ENCODE measurements at regions of chr17 and their contacts with region 1.

Region 1: GRCh38 chr17:75319904-75320691 is 30.9 kb upstream of the SLC25A19 start:
- DNase-seq: no peak
- ATAC-seq: no peak
- H3K4me3 Mint-ChIP-seq: no peak overlapping the region
- H3K27ac Mint-ChIP-seq: peak overlapping the region; percentile 14; the same call in 1 of the 2 replicates
- H3K4me1 Mint-ChIP-seq: peaks cover 16% of the 10 kb centered on the region
- H3K27me3 Mint-ChIP-seq: no peaks in the 10 kb centered on the region
- CTCF ChIP-seq: no peak

Region 2: GRCh38 chr17:75225016-75225415 is 95.1 kb before region 1 on chr17:
- CTCF ChIA-PET with region 1: no interaction called
- POLR2A ChIA-PET with region 1: no interaction called
- DNase-seq: no peak
- ATAC-seq: no peak
- H3K4me3 Mint-ChIP-seq: no peak overlapping the region
- H3K27ac Mint-ChIP-seq: no peak overlapping the region
- H3K4me1 Mint-ChIP-seq: no peaks in the 10 kb centered on the region
- H3K27me3 Mint-ChIP-seq: no peaks in the 10 kb centered on the region; the same call in 1 of the 2 replicates
- CTCF ChIP-seq: no peak

Region 3: GRCh38 chr17:75289115-75289831 is 30.8 kb before region 1 on chr17 and contains the start of gene SLC25A19:
- CTCF ChIA-PET with region 1: interaction called, 13 read pairs
- POLR2A ChIA-PET with region 1: interaction called, 3 read pairs
- DNase-seq: peak; percentile 98
- ATAC-seq: peak; percentile 98
- H3K4me3 Mint-ChIP-seq: peak within 1 kb of the TSS; percentile 94
- H3K27ac Mint-ChIP-seq: peak within 1 kb of the TSS; percentile 99
- H3K4me1 Mint-ChIP-seq: peaks cover 8% of the 10 kb centered on the region
- H3K27me3 Mint-ChIP-seq: no peaks in the 10 kb centered on the region; the same call in 1 of the 2 replicates
- CTCF ChIP-seq: no peak
- total RNA-seq, gene SLC25A19: 22.6 to 27.7 TPM (median 23.0 TPM) in 3 replicates

Region 4: GRCh38 chr17:75345514-75346167 is 25.5 kb after region 1 on chr17:
- CTCF ChIA-PET with region 1: interaction called, 20 read pairs
- POLR2A ChIA-PET with region 1: no interaction called
- DNase-seq: peak; percentile 27
- ATAC-seq: peak; percentile 51
- H3K4me3 Mint-ChIP-seq: peak overlapping the region; percentile 67
- H3K27ac Mint-ChIP-seq: peak overlapping the region; percentile 98
- H3K4me1 Mint-ChIP-seq: peaks cover 84% of the 10 kb centered on the region
- H3K27me3 Mint-ChIP-seq: no peaks in the 10 kb centered on the region
- CTCF ChIP-seq: no peak

Region 5: GRCh38 chr17:75364078-75364477 is 44.0 kb after region 1 on chr17:
- CTCF ChIA-PET with region 1: interaction called, 15 read pairs
- POLR2A ChIA-PET with region 1: no interaction called
- DNase-seq: no peak
- ATAC-seq: no peak
- H3K4me3 Mint-ChIP-seq: no peak overlapping the region
- H3K27ac Mint-ChIP-seq: 0 out of 2 replicates have a peak overlapping the region, but pooled peaks have one; percentile 3
- H3K4me1 Mint-ChIP-seq: peaks cover 59% of the 10 kb centered on the region
- H3K27me3 Mint-ChIP-seq: no peaks in the 10 kb centered on the region
- CTCF ChIP-seq: no peak

Region 6: DNA sequence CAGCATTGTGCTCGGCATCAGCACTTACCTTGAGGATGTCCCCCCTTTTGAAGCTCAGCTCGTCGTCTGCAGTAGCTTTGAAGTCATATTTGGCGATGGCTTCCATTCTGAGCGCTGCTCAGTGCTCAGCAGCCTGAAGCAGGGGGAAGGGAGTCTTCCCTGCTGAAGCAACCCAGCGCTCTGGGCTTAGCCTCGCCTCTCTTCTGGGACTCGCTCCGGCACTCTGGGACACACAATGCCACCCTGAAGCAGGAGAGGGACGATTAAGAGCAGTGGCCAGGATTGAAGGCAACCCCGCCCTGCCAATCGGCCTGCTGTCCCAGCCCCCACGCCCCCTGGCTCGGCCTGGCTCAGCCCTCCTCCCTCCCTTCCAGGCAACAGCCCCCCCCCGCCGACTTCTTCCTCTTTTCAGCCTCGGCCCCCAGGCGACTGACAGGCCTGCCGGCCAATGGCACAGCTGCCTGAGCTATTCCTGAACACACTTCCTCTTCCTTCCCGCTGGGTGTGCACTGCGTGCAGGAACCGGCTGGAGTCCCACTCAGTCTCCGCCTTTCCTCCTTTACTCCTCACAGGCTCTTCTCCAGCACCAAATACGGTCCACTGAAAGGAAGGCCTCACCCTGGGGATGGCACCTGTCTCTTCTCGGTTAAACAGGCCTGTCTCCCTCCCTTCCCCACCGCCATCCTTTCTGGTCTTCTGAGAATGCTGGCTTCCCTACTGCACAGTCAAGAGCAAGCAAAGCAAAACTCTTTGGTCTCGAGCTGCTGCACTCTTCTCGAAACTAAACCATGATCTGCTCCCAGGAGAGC is 73.6 kb after region 1 on chr17:
- CTCF ChIA-PET with region 1: interaction called, 34 read pairs
- POLR2A ChIA-PET with region 1: interaction called, 8 read pairs
- DNase-seq: peak; percentile 100
- ATAC-seq: peak; percentile 97
- H3K4me3 Mint-ChIP-seq: peak overlapping the region; percentile 94
- H3K27ac Mint-ChIP-seq: peak overlapping the region; percentile 95
- H3K4me1 Mint-ChIP-seq: peaks cover 42% of the 10 kb centered on the region
- H3K27me3 Mint-ChIP-seq: peaks cover 2% of the 10 kb centered on the region; the same call in 1 of the 2 replicates
- CTCF ChIP-seq: no peak

Region 7: GRCh38 chr17:75412455-75413317 is 92.6 kb after region 1 on chr17:
- CTCF ChIA-PET with region 1: interaction called, 21 read pairs
- POLR2A ChIA-PET with region 1: no interaction called
- DNase-seq: peak; percentile 78
- ATAC-seq: peak; percentile 93
- H3K4me3 Mint-ChIP-seq: 0 out of 2 replicates have a peak overlapping the region, but pooled peaks have one; percentile 10
- H3K27ac Mint-ChIP-seq: peak overlapping the region; percentile 29; the same call in 1 of the 2 replicates
- H3K4me1 Mint-ChIP-seq: peaks cover 7% of the 10 kb centered on the region
- H3K27me3 Mint-ChIP-seq: peaks cover 9% of the 10 kb centered on the region
- CTCF ChIP-seq: peak; percentile 65

Measured in WTC11 (cell line).